Caco-2 (cell line): ENCODE measurements at regions of chr10 and their contacts with region 1.

Region 1: DNA sequence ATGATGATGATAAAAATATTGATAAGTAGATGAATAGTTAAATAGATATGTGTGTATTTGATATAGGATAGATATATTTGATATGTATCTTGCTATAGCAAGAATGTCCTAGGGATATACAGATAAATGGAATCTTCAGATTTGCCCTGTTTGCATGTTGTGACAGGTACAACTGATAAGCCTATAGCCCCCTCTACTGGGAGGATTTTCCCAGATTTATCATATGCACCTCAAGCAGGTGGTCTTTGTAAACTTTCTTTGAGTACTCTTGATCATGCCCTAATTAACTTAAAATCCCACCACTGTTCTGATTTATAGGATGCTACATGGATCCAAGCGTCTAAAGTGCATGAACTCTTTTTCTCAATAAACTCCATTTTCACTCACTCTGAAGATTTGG is 1050.7 kb downstream of the SORCS3 start:
- DNase-seq: peak in 1 of 2 experiments; percentile 40
- H3K4me3 ChIP-seq: no peak overlapping the region
- H3K4me3 Mint-ChIP-seq: no peak overlapping the region
- H3K27ac Mint-ChIP-seq: no peak overlapping the region
- H3K4me1 ChIP-seq: peaks cover 5% of the 10 kb centered on the region; the same call in 1 of the 2 replicates
- H3K4me1 Mint-ChIP-seq: no peaks in the 10 kb centered on the region
- H3K27me3 ChIP-seq: no peaks in the 10 kb centered on the region
- H3K27me3 Mint-ChIP-seq: peaks cover 3% of the 10 kb centered on the region
- CTCF ChIP-seq: peak in 1 of 2 experiments; percentile 43

Region 2: GRCh38 chr10:104925232-104925851 is 766.5 kb before region 1 on chr10:
- CTCF ChIA-PET with region 1: no interaction called
- POLR2A ChIA-PET with region 1: no interaction called
- intact Hi-C with region 1: loop called (anchors 5 kb)
- DNase-seq: peak; percentile 38 to 57
- H3K4me3 ChIP-seq: no peak overlapping the region
- H3K4me3 Mint-ChIP-seq: no peak overlapping the region
- H3K27ac Mint-ChIP-seq: no peak overlapping the region
- H3K4me1 ChIP-seq: no peaks in the 10 kb centered on the region
- H3K4me1 Mint-ChIP-seq: no peaks in the 10 kb centered on the region
- H3K27me3 ChIP-seq: no peaks in the 10 kb centered on the region
- H3K27me3 Mint-ChIP-seq: peaks cover 8% of the 10 kb centered on the region
- CTCF ChIP-seq: peak; percentile 46 to 75

Region 3: DNA sequence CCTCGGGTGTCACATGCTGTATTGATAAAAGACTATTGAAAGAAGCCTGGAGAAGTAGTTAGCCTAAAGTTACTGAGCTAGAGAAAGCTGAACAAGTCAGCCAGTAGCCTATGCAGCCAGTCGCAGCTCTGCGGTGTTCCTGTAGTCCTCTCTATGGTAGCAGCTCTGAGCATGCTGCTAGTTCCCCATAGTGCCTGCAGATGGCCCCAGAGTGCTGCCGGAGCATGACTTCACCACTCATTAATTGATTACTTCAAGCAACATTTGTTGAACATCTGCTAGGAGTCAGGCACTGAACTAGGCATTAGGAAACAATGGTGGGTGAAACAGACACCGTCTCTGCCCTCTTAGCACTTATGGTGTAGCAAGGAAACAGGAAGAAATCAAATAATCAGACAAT is 628.0 kb before region 1 on chr10:
- CTCF ChIA-PET with region 1: no interaction called
- POLR2A ChIA-PET with region 1: no interaction called
- intact Hi-C with region 1: loop called (anchors 1 kb)
- DNase-seq: peak; percentile 44 to 55
- H3K4me3 ChIP-seq: no peak overlapping the region
- H3K4me3 Mint-ChIP-seq: no peak overlapping the region
- H3K27ac Mint-ChIP-seq: no peak overlapping the region
- H3K4me1 ChIP-seq: no peaks in the 10 kb centered on the region
- H3K4me1 Mint-ChIP-seq: no peaks in the 10 kb centered on the region
- H3K27me3 ChIP-seq: no peaks in the 10 kb centered on the region
- H3K27me3 Mint-ChIP-seq: peaks cover 7% of the 10 kb centered on the region
- CTCF ChIP-seq: peak; percentile 64 to 75

Region 4: DNA sequence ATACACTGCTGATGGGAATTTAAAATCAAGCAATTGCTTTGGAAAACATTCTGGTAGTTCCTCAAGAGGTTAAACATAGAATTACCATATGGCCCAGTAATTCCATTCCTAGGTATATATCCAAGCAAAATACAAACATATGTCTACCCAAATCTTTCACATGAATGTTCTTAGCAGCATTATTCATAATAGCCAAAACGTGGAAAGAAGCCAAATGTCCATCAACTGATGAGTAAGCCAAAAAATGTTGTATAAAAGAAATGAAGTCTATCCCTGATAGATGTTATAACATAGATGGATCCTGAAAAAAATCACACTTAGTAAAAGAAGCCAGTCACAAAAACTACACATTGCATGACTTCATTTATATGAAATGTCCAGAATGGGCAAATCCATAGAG is 157.7 kb before region 1 on chr10:
- CTCF ChIA-PET with region 1: no interaction called
- POLR2A ChIA-PET with region 1: no interaction called
- intact Hi-C with region 1: loop called (anchors 10 kb)
- DNase-seq: no peak
- H3K4me3 ChIP-seq: no peak overlapping the region
- H3K4me3 Mint-ChIP-seq: no peak overlapping the region
- H3K27ac Mint-ChIP-seq: no peak overlapping the region
- H3K4me1 ChIP-seq: no peaks in the 10 kb centered on the region
- H3K4me1 Mint-ChIP-seq: no peaks in the 10 kb centered on the region
- H3K27me3 ChIP-seq: no peaks in the 10 kb centered on the region
- H3K27me3 Mint-ChIP-seq: no peaks in the 10 kb centered on the region
- CTCF ChIP-seq: no peak